SK-N-SH (cell line): ENCODE measurements at regions of chr3 and their contacts with region 1.

Region 1: DNA sequence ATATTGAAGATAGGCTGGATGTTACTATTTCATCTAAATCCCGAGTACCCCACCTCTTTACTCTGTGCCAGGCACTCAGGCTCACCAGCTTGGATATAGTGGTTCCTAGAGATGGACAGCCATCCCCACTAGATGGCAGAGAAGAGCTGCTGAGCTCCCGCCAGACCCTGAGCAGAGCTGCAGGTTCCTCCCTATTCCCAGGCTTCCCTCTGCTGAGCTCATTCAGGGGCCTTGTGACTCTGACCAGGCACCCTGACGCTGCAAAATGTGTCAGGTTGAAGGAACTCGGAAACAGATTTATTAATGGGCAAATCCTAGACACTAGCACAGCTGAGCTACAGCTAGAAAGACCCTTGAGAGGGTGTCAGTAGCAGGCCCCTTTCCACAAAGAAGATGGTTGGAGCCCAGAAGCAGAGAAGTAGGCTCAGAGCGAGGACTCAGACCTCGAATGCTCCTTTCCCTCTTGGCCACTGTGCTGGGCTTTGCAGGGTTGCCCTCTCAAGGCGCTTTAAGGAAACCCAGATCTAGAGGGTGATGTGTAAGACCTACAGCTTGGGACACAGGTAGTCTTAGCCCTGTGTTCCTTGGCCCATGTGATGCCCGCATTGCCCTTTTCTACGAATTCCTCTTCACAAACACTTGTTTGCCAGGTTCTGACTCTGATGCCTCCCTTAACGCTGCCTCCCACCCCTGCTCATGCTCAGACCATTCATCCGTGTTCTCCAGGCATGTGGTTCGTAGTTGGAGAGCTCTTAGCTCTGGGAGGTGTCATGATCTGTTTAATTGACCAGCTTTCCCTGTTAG is 38.0 kb upstream of the RHO start:
- DNase-seq: peak; percentile 84
- H3K4me3 ChIP-seq: no peak overlapping the region
- H3K27ac ChIP-seq: peak overlapping the region in 1 of 2 experiments; percentile 41; a peak in 1 of 4 replicates
- H3K4me1 ChIP-seq: peaks cover 0 to 9% of the 10 kb centered on the region in 2 experiments; a peak in 1 of 4 replicates
- H3K27me3 ChIP-seq: no peaks in the 10 kb centered on the region
- CTCF ChIP-seq: peak; percentile 92
- EP300 ChIP-seq: no peak
- RAD21 ChIP-seq: peak; percentile 98

Region 2: DNA sequence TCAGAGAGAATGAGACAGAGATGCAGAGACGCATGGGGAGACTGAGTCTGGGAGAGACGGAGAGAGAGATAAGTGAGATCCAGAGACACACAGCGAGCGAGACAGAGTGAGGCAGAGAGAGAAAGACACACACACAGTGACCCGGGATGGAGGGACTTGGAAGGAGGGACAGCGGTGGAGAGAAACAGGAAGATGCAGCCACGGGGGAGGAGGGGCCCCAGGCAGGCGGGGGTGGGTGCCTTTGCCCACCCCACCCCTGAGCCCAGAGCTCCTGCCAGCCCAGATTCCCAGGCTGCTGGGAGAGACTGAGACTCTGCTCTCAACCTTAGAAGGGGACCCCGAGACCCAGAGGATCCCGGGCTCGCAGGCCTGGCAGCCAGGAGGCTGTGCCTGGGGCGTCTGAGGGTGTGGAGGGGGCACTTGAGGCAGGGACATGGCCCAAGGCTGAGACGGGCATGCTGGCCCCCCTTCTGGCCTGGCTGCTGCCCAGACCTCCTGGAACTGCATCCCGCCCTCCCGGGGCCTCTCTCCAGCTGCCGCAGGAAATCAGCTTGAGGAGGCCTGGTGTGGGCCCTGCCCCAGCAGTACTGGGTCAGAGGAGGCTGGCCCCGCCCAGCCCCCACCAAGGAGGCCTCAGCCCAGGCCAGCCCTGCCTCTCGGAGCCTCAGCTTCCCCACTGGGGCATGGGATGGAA is 70.6 kb after region 1 on chr3:
- CTCF ChIA-PET with region 1: interaction called, 18 read pairs
- POLR2A ChIA-PET with region 1: no interaction called
- DNase-seq: peak; percentile 91
- H3K4me3 ChIP-seq: peak overlapping the region in 1 of 2 experiments; percentile 7; a peak in 1 of 4 replicates
- H3K27ac ChIP-seq: peak overlapping the region; percentile 69 to 85
- H3K4me1 ChIP-seq: peaks cover 36 to 67% of the 10 kb centered on the region in 2 experiments
- H3K27me3 ChIP-seq: no peaks in the 10 kb centered on the region
- CTCF ChIP-seq: no peak
- EP300 ChIP-seq: peak; percentile 53 to 57; a peak in 2 of 4 replicates
- RAD21 ChIP-seq: no peak

Region 3: DNA sequence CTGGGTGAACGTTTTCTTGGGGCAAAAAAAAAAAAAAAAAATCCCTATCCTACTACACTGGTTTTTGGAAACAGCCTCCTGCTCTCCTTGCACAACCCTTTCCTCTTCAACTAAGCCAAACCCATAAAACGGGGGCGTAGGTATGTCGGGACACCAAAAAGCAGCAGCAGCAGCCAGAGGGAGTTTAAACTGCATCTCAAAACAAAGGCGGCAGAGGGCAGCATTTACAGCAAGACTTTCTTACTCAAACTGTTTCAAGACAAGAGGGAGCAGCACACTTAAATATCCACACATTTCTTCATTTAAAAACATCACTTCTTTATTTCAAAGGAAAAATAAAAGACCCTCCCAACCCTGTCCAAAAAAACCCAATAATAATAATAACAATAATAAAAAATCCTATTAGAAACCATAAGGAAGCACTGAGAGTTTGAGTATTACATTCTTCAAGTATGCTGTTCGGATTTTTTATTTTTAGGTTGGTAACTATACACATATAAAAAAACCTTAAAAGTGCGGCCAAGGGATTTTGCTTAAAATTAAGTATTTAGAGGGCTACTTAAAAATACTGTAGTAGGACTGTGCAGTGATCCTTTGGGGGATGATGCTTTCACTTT is 159.9 kb after region 1 on chr3:
- CTCF ChIA-PET with region 1: interaction called, 26 read pairs
- POLR2A ChIA-PET with region 1: no interaction called
- DNase-seq: peak; percentile 58
- H3K4me3 ChIP-seq: peak overlapping the region in 1 of 2 experiments; percentile 27; a peak in 1 of 4 replicates
- H3K27ac ChIP-seq: peak overlapping the region; percentile 28 to 52; a peak in 2 of 4 replicates
- H3K4me1 ChIP-seq: peaks cover 8 to 24% of the 10 kb centered on the region in 2 experiments
- H3K27me3 ChIP-seq: no peaks in the 10 kb centered on the region
- CTCF ChIP-seq: peak; percentile 76
- EP300 ChIP-seq: no peak
- RAD21 ChIP-seq: peak; percentile 91

Region 4: GRCh38 chr3:129831503-129831902 is 341.1 kb after region 1 on chr3:
- CTCF ChIA-PET with region 1: interaction called, 15 read pairs
- POLR2A ChIA-PET with region 1: no interaction called
- DNase-seq: no peak
- H3K4me3 ChIP-seq: no peak overlapping the region
- H3K27ac ChIP-seq: no peak overlapping the region
- H3K4me1 ChIP-seq: peaks cover 0 to 6% of the 10 kb centered on the region in 2 experiments; a peak in 3 of 4 replicates
- H3K27me3 ChIP-seq: no peaks in the 10 kb centered on the region
- CTCF ChIP-seq: no peak
- EP300 ChIP-seq: no peak
- RAD21 ChIP-seq: no peak